ENCODE measurements at regions of chr12 and their contacts with region 1.

Region 1: GRCh38 chr12:44875954-44876553 is at the start of gene NELL2:
- DNase-seq: no peak
- ATAC-seq: peak; percentile 90
- H3K4me3 ChIP-seq: peak within 1 kb of the TSS; percentile 39 to 54
- H3K27ac ChIP-seq: no peak within 1 kb of the TSS
- H3K4me1 ChIP-seq: peaks cover 10% of the 10 kb centered on the region; the same call in 1 of the 2 replicates
- H3K27me3 ChIP-seq: peaks cover 35% of the 10 kb centered on the region
- CTCF ChIP-seq: no peak
- total RNA-seq, gene NELL2: 0.28 TPM

Region 2: DNA sequence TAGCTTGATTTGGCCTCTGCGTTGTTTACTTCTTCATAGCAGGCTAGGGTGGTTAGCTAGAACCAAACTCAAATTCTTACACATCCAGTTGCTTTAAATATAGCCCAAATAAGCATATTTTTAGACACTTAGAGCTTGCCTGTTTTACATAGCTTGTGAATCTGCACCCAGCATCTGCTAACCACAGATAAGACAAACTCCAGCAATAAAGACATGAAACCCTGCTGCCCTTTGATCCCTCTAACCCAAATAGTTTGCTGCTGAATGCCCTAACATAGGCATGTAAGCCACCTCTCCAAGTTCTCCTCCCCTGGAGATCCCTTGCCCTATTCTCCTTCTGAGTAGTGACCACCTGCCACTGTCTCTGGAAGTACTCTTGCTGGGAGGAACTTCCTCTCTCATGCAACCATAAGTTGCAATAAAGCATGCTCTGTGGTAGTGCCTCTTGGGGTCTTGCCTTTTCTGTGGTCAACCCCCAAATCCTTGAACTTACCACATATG is 854.5 kb before region 1 on chr12:
- CTCF ChIA-PET with region 1: no interaction called
- POLR2A ChIA-PET with region 1: interaction called, 17 read pairs
- in situ Hi-C with region 1: no loop called
- intact Hi-C with region 1: no loop called
- DNase-seq: no peak
- ATAC-seq: no peak
- H3K4me3 ChIP-seq: no peak overlapping the region
- H3K27ac ChIP-seq: no peak overlapping the region
- H3K4me1 ChIP-seq: no peaks in the 10 kb centered on the region
- H3K27me3 ChIP-seq: no peaks in the 10 kb centered on the region
- CTCF ChIP-seq: no peak

Region 3: GRCh38 chr12:44835641-44836379 is 40.2 kb before region 1 on chr12:
- CTCF ChIA-PET with region 1: no interaction called
- POLR2A ChIA-PET with region 1: no interaction called
- in situ Hi-C with region 1: no loop called
- intact Hi-C with region 1: no loop called
- DNase-seq: no peak
- ATAC-seq: no peak
- H3K4me3 ChIP-seq: no peak overlapping the region
- H3K27ac ChIP-seq: no peak overlapping the region
- H3K4me1 ChIP-seq: no peaks in the 10 kb centered on the region
- H3K27me3 ChIP-seq: no peaks in the 10 kb centered on the region
- CTCF ChIP-seq: no peak

Region 4: GRCh38 chr12:45644541-45644940 is 768.5 kb after region 1 on chr12:
- CTCF ChIA-PET with region 1: no interaction called
- POLR2A ChIA-PET with region 1: interaction called, 12 read pairs
- in situ Hi-C with region 1: no loop called
- intact Hi-C with region 1: no loop called
- DNase-seq: no peak
- ATAC-seq: no peak
- H3K4me3 ChIP-seq: no peak overlapping the region
- H3K27ac ChIP-seq: no peak overlapping the region
- H3K4me1 ChIP-seq: no peaks in the 10 kb centered on the region
- H3K27me3 ChIP-seq: peaks cover 2% of the 10 kb centered on the region; the same call in 1 of the 2 replicates
- CTCF ChIP-seq: no peak

Measured in Panc1 (cell line).